ENCODE measurements at regions of chr21 and their contacts with region 1.

Region 1: GRCh38 chr21:42156690-42157577 is 62.0 kb upstream of the ABCG1 start:
- DNase-seq: no peak
- H3K4me3 ChIP-seq: no peak overlapping the region
- H3K27ac ChIP-seq: no peak overlapping the region
- H3K4me1 ChIP-seq: peaks cover 0 to 14% (median 4%) of the 10 kb centered on the region in 3 donors
- H3K27me3 ChIP-seq: peaks cover 0 to 78% (median 4%) of the 10 kb centered on the region in 4 donors
- CTCF ChIP-seq: no peak
- POLR2A ChIP-seq: no peak

Region 2: DNA sequence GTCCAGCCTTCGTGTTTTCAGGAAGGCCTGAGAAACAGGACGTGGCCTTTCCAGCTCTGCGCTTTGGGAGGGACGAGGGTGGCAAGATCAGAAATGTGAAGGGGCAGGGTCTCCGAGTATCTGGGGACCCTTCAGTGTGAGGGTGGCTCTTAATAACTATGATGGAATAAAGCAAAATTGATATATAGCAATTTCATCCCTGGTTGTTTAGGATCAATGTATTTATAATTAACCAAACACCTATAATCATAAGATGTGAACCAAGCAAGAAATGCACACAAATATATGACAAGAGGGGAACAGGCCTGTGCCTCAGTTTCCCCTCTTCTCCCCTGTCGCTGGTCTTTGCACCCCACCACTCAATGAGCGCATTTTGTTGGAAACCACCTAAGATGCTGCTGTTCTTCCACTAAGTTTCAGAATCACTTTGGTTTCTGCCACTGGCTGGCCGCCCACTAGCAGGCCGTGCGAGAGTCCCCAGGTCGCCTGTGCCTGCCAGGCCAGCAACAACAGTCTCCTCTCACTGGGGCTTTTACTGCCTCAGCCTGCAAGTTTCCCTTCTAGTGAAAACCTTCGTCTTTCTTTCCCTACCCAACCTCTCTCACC is 283.4 kb after region 1 on chr21:
- intact Hi-C with region 1: loop called (anchors 10 kb)
- DNase-seq: no peak
- H3K4me3 ChIP-seq: no peak overlapping the region
- H3K27ac ChIP-seq: no peak overlapping the region
- H3K4me1 ChIP-seq: no peaks in the 10 kb centered on the region
- H3K27me3 ChIP-seq: peaks cover 0 to 39% (median 0%) of the 10 kb centered on the region in 4 donors
- CTCF ChIP-seq: no peak
- POLR2A ChIP-seq: no peak

Region 3: DNA sequence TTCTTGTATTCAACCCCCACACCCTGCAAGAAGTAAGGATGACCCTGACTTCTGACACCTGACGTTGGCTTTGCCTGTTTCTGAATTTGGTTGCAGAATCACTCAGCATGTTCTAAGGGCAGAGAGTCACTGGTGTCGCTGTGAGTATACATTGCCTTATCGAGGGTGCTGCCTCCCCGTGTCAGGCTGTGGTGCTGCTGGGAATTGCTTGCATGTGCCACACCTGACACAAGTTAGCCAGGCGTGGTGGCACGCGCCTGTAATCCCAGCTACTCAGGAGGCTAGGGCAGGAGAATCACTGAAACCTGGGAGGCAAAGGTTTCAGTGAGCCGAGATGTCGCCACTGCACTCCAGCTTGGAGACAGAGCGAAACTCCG is 676.5 kb after region 1 on chr21:
- intact Hi-C with region 1: loop called (anchors 10 kb)
- DNase-seq: no peak
- H3K4me3 ChIP-seq: no peak overlapping the region
- H3K27ac ChIP-seq: no peak overlapping the region
- H3K4me1 ChIP-seq: peaks cover 0 to 4% (median 0%) of the 10 kb centered on the region in 3 donors
- H3K27me3 ChIP-seq: peaks cover 0 to 40% (median 0%) of the 10 kb centered on the region in 4 donors
- CTCF ChIP-seq: peak in 1 of 6 experiments; percentile 44
- POLR2A ChIP-seq: no peak

Measured in esophagus squamous epithelium (tissue), 5 donors.